ENCODE measurements at regions of chr6 and their contacts with region 1.

Region 1: DNA sequence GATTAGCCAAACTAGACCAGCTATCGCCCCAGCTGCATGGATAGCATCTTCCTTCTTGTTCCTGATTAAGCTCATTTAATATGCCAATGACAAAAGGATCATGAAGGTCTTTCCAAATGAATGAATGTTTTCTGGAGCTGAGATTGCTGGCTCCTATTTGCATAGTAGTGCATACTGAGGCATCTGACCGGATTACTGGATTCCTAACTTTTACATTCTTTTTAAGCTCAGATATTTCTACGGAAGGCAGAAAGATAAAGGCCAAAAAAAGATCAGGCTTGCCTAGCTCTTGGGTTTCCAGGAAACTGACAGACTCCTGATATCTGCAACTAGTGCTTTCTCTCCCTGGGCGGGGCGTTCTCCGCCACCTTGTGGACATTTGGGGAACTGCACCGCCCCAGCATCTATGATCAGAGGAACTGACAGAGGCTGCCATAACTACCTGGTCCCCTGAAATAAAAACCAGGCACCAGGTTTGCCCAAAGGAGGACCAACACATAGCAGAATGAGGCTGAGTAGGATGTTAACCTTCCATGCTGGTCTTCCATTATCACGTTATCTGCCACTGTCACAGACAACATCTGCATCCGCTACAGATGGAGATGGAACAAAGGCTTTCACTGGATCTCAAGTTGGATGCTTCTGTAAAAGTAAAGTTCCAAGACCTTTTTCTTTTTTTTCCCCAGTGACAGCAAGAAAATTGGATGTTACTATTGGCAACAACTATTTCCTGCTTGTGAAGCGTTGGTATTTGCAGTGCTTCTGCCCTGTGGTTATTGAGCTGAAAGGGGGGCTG is 33.2 kb downstream of the NT5E start:
- DNase-seq: peak; percentile 75
- H3K4me3 Mint-ChIP-seq: no peak overlapping the region
- H3K27ac Mint-ChIP-seq: no peak overlapping the region
- H3K4me1 Mint-ChIP-seq: peaks cover 6% of the 10 kb centered on the region
- H3K27me3 Mint-ChIP-seq: no peaks in the 10 kb centered on the region
- CTCF ChIP-seq: peak; percentile 96

Region 2: GRCh38 chr6:85354761-85355618 is 128.1 kb before region 1 on chr6:
- CTCF ChIA-PET with region 1: interaction called, 285 read pairs
- POLR2A ChIA-PET with region 1: interaction called, 5 read pairs
- intact Hi-C with region 1: loop called (anchors 1 kb)
- DNase-seq: peak; percentile 73
- H3K4me3 Mint-ChIP-seq: no peak overlapping the region
- H3K27ac Mint-ChIP-seq: no peak overlapping the region
- H3K4me1 Mint-ChIP-seq: peaks cover 9% of the 10 kb centered on the region
- H3K27me3 Mint-ChIP-seq: no peaks in the 10 kb centered on the region
- CTCF ChIP-seq: peak; percentile 96

Region 3: DNA sequence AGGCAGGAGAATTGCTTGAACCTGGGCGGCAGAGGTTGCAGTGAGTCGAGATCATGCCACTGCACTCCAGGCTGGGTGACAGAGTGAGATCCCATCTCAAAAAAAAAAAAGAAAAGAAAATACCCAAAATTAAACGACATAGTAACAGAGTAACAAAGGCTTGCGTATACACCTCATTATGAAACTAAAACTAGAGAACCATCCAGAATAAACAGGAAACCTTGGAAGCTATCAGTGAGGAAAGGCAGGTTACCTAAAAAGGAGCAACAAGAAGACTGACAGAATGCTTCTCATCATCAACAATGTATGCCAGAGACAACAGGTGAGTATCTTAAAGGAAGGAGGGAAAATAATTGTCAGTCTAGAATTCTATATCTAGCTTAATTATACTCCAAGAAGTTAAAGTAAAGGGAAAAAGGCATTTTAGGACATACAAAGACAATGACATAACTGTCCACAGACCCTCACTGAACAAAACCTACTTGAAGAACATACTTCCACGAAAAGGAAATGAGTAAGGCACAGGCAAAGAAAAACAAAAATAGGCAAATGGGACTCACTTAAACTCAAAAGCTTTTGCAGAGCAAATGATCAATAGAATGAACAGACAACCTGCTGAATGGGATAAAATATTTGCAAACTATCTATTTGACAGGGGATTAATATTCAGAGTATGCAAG is 97.3 kb before region 1 on chr6:
- CTCF ChIA-PET with region 1: interaction called, 18 read pairs
- POLR2A ChIA-PET with region 1: no interaction called
- intact Hi-C with region 1: no loop called
- DNase-seq: no peak
- H3K4me3 Mint-ChIP-seq: no peak overlapping the region
- H3K27ac Mint-ChIP-seq: no peak overlapping the region
- H3K4me1 Mint-ChIP-seq: peaks cover 8% of the 10 kb centered on the region
- H3K27me3 Mint-ChIP-seq: no peaks in the 10 kb centered on the region
- CTCF ChIP-seq: no peak

Region 4: GRCh38 chr6:85449818-85450759 is 33.0 kb before region 1 on chr6 and contains the start of gene NT5E:
- CTCF ChIA-PET with region 1: interaction called, 58 read pairs
- POLR2A ChIA-PET with region 1: interaction called, 18 read pairs
- intact Hi-C with region 1: loop called (anchors 1 kb)
- DNase-seq: peak; percentile 69
- H3K4me3 Mint-ChIP-seq: peak within 1 kb of the TSS; percentile 88
- H3K27ac Mint-ChIP-seq: peak within 1 kb of the TSS; percentile 92
- H3K4me1 Mint-ChIP-seq: peaks cover 47% of the 10 kb centered on the region
- H3K27me3 Mint-ChIP-seq: no peaks in the 10 kb centered on the region
- CTCF ChIP-seq: no peak
- total RNA-seq, gene NT5E: 112 and 121 TPM in 2 replicates

Region 5: GRCh38 chr6:85460921-85461797 is 21.9 kb before region 1 on chr6:
- CTCF ChIA-PET with region 1: interaction called, 65 read pairs
- POLR2A ChIA-PET with region 1: interaction called, 4 read pairs
- intact Hi-C with region 1: no loop called
- DNase-seq: peak; percentile 83
- H3K4me3 Mint-ChIP-seq: no peak overlapping the region
- H3K27ac Mint-ChIP-seq: peak overlapping the region; percentile 80
- H3K4me1 Mint-ChIP-seq: peaks cover 91% of the 10 kb centered on the region
- H3K27me3 Mint-ChIP-seq: no peaks in the 10 kb centered on the region
- CTCF ChIP-seq: no peak

Region 6: GRCh38 chr6:85498596-85499258 is 15.6 kb after region 1 on chr6:
- CTCF ChIA-PET with region 1: interaction called, 78 read pairs
- POLR2A ChIA-PET with region 1: interaction called, 8 read pairs
- intact Hi-C with region 1: no loop called
- DNase-seq: peak; percentile 97
- H3K4me3 Mint-ChIP-seq: no peak overlapping the region
- H3K27ac Mint-ChIP-seq: no peak overlapping the region
- H3K4me1 Mint-ChIP-seq: peaks cover 32% of the 10 kb centered on the region
- H3K27me3 Mint-ChIP-seq: no peaks in the 10 kb centered on the region
- CTCF ChIP-seq: no peak

Measured in MCF 10A (cell line).